Naive thymus-derived CD4-positive, alpha-beta T cell (primary cell): ENCODE measurements at regions of chr3 and their contacts with region 1.

Region 1: DNA sequence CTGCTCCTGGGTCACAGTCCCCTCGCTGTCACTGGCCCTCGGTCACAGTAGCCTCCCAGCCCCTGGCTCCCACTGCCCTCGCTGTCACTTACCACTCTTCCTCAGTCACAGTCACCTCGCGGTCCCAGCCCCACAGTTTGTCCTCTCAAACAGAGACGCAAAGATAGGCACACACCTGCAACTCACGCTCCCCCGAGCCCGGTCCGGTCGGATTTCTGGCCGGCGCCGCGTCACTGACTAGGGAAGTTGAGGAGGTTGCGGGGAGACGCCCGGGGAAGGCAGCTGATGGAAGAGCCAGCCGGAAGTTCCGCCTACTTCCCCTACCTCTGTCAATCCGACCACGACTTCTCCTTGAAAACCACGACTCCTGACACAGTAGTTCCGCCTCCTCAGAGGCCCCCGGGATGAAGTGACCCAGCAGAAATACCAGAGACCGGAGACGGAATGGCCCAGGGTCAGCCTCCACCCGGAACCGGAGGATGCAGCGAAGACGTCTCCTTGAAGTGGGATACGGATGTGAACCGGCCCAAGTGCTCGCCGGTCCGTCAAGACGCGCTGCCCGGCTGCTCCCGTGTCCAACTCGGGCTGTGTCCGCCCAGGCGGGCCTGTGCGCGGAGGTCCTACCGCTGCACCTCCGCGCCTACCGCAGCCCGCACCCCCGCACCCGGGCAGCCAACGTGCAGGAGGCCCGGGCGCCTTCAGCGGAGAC is at the start of gene PCYT1A:
- DNase-seq: peak; percentile 48 to 75 (median 65)
- ATAC-seq: peak; percentile 93
- H3K4me3 ChIP-seq: peak within 1 kb of the TSS; percentile 99
- H3K4me3 Mint-ChIP-seq: peak within 1 kb of the TSS; percentile 98 to 100 (median 99)
- H3K27ac ChIP-seq: peak within 1 kb of the TSS; percentile 84
- H3K27ac Mint-ChIP-seq: peak within 1 kb of the TSS; percentile 92 to 98 (median 97)
- H3K4me1 ChIP-seq: peaks cover 12 to 15% of the 10 kb centered on the region in 2 donors
- H3K4me1 Mint-ChIP-seq: peaks cover 20 to 56% (median 46%) of the 10 kb centered on the region in 7 donors
- H3K27me3 ChIP-seq: no peaks in the 10 kb centered on the region
- H3K27me3 Mint-ChIP-seq: peaks cover 0 to 2% (median 0%) of the 10 kb centered on the region in 5 donors
- total RNA-seq, gene PCYT1A: 47.5 to 87.6 (median 62.9) TPM

Region 2: DNA sequence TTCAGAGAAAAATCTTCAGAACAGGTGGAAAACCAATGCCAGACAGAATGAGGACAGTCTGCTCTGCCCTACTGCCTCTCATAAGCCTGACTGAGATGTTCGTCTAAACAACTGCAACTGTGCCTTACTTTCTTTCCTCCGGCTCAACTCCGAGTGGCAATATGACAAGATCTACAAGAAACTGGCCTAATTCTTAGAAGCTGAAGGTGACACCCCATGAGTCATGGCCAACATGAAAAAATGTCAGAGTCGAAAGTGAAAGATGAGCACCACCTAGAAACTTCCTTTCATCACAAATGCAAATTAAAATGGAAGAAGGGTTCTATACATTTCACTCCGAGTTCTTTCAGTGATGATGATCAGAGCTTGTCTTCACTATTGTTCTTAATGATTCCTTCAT is 13.0 kb before region 1 on chr3:
- CTCF ChIA-PET with region 1: no interaction called
- POLR2A ChIA-PET with region 1: interaction called, 3 read pairs
- intact Hi-C with region 1: loop called (anchors 1 kb)
- DNase-seq: peak in 8 of 9 donors; percentile 20 to 72 (median 42)
- ATAC-seq: peak; percentile 91
- H3K4me3 ChIP-seq: peak overlapping the region; percentile 7
- H3K4me3 Mint-ChIP-seq: peak overlapping the region; percentile 41 to 84 (median 74)
- H3K27ac ChIP-seq: peak overlapping the region; percentile 50
- H3K27ac Mint-ChIP-seq: peak overlapping the region; percentile 57 to 96 (median 89)
- H3K4me1 ChIP-seq: peaks cover 10 to 21% of the 10 kb centered on the region in 2 donors
- H3K4me1 Mint-ChIP-seq: peaks cover 19 to 62% (median 37%) of the 10 kb centered on the region in 7 donors
- H3K27me3 ChIP-seq: no peaks in the 10 kb centered on the region
- H3K27me3 Mint-ChIP-seq: no peaks in the 10 kb centered on the region

Region 3: DNA sequence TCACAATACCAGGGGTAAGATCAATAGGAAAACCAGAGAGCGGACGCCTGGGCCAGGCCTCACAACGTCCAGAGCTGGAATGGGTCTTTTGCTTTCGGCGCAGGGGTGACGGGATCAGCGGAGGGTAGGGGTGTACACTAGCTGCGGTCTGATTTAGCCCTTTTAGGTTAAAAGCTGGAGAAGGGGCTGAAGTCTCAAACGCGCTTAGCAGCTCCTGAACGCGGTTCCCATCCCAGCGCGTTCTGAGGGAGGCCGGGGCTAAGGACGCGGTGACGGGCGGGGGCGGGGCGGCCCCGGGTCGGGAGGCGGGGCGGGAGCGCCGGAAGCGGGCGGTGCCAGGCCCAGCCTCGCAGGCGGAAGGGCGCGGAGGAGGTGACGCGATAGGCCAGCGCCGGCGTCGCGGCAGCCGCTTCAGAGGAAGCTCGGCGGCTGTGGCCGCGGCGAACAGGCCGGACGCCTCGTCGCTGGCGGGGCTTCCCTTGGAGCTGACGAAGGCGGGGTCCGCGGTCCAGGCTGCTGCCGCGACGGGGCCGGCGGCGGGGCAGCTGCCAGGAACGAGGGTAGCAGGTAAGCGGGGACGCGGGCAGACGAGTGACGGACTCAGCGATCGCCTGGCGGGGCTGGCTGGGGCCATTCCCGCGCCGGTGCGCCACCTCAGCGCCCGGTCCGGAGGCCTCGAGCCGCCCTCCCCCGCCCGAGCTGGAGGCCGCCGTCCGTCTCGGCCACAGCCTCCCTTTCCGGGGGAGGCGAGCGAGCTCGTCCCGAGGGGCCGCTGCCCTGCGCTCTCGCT is 580.1 kb after region 1 on chr3 and contains the start of gene SENP5:
- CTCF ChIA-PET with region 1: no interaction called
- POLR2A ChIA-PET with region 1: no interaction called
- intact Hi-C with region 1: loop called in 1 of 2 experiments (anchors 1 kb)
- DNase-seq: peak; percentile 79 to 92 (median 87)
- ATAC-seq: peak; percentile 99
- H3K4me3 ChIP-seq: peak within 1 kb of the TSS; percentile 86
- H3K4me3 Mint-ChIP-seq: peak within 1 kb of the TSS; percentile 90 to 99 (median 97)
- H3K27ac ChIP-seq: peak within 1 kb of the TSS; percentile 98
- H3K27ac Mint-ChIP-seq: peak within 1 kb of the TSS; percentile 90 to 99 (median 95)
- H3K4me1 ChIP-seq: peaks cover 13 to 16% of the 10 kb centered on the region in 2 donors
- H3K4me1 Mint-ChIP-seq: peaks cover 9 to 42% (median 34%) of the 10 kb centered on the region in 7 donors
- H3K27me3 ChIP-seq: no peaks in the 10 kb centered on the region
- H3K27me3 Mint-ChIP-seq: no peaks in the 10 kb centered on the region
- total RNA-seq, gene SENP5: 40.6 to 59.4 (median 43.1) TPM